ENCODE measurements at regions of chr1 and their contacts with region 1.

Region 1: GRCh38 chr1:40449684-40450494 is at the start of gene ZFP69B:
- DNase-seq: peak; percentile 97
- H3K4me3 Mint-ChIP-seq: peak within 1 kb of the TSS; percentile 78
- H3K27ac Mint-ChIP-seq: peak within 1 kb of the TSS; percentile 91
- H3K4me1 Mint-ChIP-seq: peaks cover 28% of the 10 kb centered on the region
- H3K27me3 Mint-ChIP-seq: no peaks in the 10 kb centered on the region
- total RNA-seq, gene ZFP69B: 5.5 and 6.3 TPM in 2 replicates

Region 2: DNA sequence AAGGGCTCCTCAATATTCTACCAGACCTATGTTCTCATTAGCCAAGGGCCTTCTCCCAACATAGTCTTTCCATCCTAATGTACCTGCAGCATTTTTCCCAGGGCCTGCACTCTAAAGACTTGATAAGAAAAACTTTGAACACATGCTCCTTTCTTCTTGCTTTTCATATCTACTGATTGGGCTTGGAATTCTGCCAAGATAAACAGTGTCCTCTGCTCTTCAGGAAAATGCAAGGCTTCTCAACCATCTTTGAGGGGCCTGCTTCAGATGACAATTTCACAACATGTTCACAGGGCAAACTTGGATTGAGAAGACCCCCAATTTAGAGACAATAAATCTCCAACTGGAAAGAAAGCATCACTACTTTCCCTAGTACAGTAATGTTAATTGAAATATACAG is 327.0 kb before region 1 on chr1:
- intact Hi-C with region 1: no loop called
- DNase-seq: no peak
- H3K4me3 Mint-ChIP-seq: no peak overlapping the region
- H3K27ac Mint-ChIP-seq: no peak overlapping the region
- H3K4me1 Mint-ChIP-seq: no peaks in the 10 kb centered on the region
- H3K27me3 Mint-ChIP-seq: peaks cover 23% of the 10 kb centered on the region

Region 3: GRCh38 chr1:40373338-40374283 is 76.3 kb before region 1 on chr1 and contains the start of gene SMAP2:
- intact Hi-C with region 1: loop called (anchors 5 kb)
- DNase-seq: peak; percentile 99
- H3K4me3 Mint-ChIP-seq: peak within 1 kb of the TSS; percentile 96
- H3K27ac Mint-ChIP-seq: peak within 1 kb of the TSS; percentile 99
- H3K4me1 Mint-ChIP-seq: peaks cover 45% of the 10 kb centered on the region
- H3K27me3 Mint-ChIP-seq: no peaks in the 10 kb centered on the region
- total RNA-seq, gene SMAP2: 156 and 157 TPM in 2 replicates

Region 4: GRCh38 chr1:40385437-40386358 is 64.2 kb before region 1 on chr1:
- intact Hi-C with region 1: loop called (anchors 5 kb)
- DNase-seq: peak; percentile 93
- H3K4me3 Mint-ChIP-seq: peak overlapping the region; percentile 88
- H3K27ac Mint-ChIP-seq: peak overlapping the region; percentile 99
- H3K4me1 Mint-ChIP-seq: peaks cover 79% of the 10 kb centered on the region
- H3K27me3 Mint-ChIP-seq: no peaks in the 10 kb centered on the region

Region 5: DNA sequence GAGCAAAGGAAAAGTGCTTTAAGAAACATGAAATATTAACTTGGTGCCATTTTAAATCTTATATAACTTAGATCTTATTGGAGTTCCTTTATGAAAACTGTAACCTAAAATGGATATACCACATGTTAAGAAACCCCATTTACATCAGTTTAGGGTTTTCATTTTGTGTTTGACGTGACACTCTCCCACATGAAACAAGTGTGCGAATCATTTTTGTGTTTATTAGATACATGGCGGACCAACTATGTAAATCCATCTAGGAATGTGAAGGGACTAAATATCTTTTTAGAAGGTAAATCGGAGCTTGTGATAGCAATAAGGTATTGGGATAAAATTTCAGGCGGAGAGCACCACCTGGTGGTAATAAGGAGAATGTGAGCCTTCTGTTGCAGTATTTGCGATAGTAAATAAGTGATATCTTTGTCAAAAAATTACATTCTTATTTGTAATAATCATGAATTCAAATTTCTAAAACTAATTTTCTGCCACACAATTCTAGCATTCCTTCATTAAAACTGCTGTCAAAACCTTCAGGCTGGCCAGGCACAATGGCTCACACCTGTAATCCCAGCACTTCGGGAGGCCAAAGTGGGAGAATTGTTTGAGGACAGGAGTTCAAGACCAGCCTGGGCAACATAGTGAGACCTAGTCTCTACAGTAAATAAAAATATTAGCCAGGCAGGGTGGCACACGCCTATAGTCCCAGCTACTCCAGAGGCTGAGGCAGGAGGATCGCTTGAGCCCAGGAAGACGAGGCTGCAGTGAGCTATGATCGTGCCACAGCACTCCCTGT is 45.0 kb before region 1 on chr1:
- intact Hi-C with region 1: loop called (anchors 2 kb)
- DNase-seq: peak; percentile 82
- H3K4me3 Mint-ChIP-seq: peak overlapping the region; percentile 77
- H3K27ac Mint-ChIP-seq: peak overlapping the region; percentile 95
- H3K4me1 Mint-ChIP-seq: peaks cover 50% of the 10 kb centered on the region
- H3K27me3 Mint-ChIP-seq: no peaks in the 10 kb centered on the region

Region 6: DNA sequence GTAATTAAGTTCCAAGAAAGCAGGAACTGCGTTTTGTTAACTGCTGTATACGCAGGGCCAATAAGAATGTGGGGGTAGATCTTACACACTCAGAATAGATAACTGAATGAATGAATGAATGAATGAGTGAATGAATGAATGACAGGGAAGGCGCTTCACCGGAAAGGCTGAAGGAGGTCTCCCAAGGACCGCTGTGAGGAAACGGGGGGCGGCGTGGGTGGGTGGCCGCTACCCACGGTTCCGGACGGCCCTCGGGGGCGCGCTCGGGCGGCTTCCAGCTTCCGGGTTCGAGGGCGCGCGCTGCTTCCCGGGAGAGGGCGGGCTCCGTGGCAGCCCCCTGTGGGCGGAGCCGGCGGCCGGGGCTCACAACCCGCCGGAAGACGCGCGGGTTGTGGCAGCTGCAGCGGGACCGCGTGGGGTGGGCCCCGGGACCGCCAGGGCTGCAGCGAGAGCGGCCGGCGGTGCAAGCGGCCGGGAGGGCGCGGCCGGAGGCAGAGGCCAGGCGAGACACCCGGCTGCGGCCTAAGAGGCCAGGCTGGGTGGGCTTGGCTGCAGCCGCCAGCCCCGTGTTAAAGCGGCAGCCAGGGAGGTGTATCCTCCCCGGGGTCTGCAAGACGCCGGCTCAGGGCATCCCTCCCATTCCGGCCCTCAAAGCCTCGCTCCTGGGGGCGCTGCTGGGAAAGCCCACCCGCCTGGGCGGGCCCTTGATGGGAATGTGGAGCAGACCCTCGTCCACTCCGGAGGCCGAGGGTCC is 27.2 kb after region 1 on chr1 and contains the start of gene ZFP69:
- intact Hi-C with region 1: loop called (anchors 2 kb)
- DNase-seq: peak; percentile 91
- H3K4me3 Mint-ChIP-seq: peak within 1 kb of the TSS; percentile 77
- H3K27ac Mint-ChIP-seq: peak within 1 kb of the TSS; percentile 45
- H3K4me1 Mint-ChIP-seq: peaks cover 18% of the 10 kb centered on the region
- H3K27me3 Mint-ChIP-seq: no peaks in the 10 kb centered on the region
- total RNA-seq, gene ZFP69: 3.1 and 3.9 TPM in 2 replicates

Region 7: GRCh38 chr1:40508375-40509341 is 58.8 kb after region 1 on chr1 and contains the start of gene EXO5:
- intact Hi-C with region 1: loop called (anchors 1 kb)
- DNase-seq: peak; percentile 96
- H3K4me3 Mint-ChIP-seq: peak within 1 kb of the TSS; percentile 88
- H3K27ac Mint-ChIP-seq: peak within 1 kb of the TSS; percentile 88
- H3K4me1 Mint-ChIP-seq: peaks cover 11% of the 10 kb centered on the region
- H3K27me3 Mint-ChIP-seq: no peaks in the 10 kb centered on the region
- total RNA-seq, gene EXO5: 17.2 and 18.0 TPM in 2 replicates

Region 8: GRCh38 chr1:40531381-40532061 is 81.6 kb after region 1 on chr1 and contains the start of gene ZNF684:
- intact Hi-C with region 1: loop called (anchors 2 kb)
- DNase-seq: peak; percentile 96
- H3K4me3 Mint-ChIP-seq: peak within 1 kb of the TSS; percentile 97
- H3K27ac Mint-ChIP-seq: peak within 1 kb of the TSS; percentile 93
- H3K4me1 Mint-ChIP-seq: peaks cover 22% of the 10 kb centered on the region
- H3K27me3 Mint-ChIP-seq: peaks cover 12% of the 10 kb centered on the region
- total RNA-seq, gene ZNF684: 4.7 and 4.9 TPM in 2 replicates